Calu3 (cell line): ENCODE measurements at regions of chr12 and their contacts with region 1.

Region 1: GRCh38 chr12:4763549-4763948 is 43.3 kb downstream of the GALNT8 start:
- DNase-seq: peak; percentile 8
- H3K4me3 Mint-ChIP-seq: no peak overlapping the region
- H3K27ac Mint-ChIP-seq: no peak overlapping the region
- H3K4me1 Mint-ChIP-seq: no peaks in the 10 kb centered on the region
- H3K27me3 Mint-ChIP-seq: peaks cover 67% of the 10 kb centered on the region
- CTCF ChIP-seq: no peak

Region 2: DNA sequence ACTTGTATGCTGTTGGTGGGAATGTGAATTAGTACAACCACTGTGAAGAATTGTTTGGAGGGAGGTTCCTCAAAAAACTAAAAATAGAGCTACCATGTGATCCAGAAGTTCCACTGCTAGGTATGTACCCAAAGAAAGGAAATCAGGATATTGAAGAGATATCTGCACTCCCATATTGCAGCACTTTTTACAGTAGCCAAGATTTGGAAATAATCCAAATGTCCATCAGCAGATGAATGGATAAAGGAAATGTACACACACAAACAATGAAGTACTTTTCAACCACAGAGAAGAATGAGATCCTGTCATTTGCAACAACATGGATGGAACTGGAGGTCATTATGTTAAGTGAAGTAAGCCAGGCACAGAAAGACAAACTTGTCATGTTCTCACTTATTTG is 416.6 kb before region 1 on chr12:
- CTCF ChIA-PET with region 1: no interaction called
- intact Hi-C with region 1: no loop called
- DNase-seq: no peak
- H3K4me3 Mint-ChIP-seq: no peak overlapping the region
- H3K27ac Mint-ChIP-seq: no peak overlapping the region
- H3K4me1 Mint-ChIP-seq: no peaks in the 10 kb centered on the region
- H3K27me3 Mint-ChIP-seq: no peaks in the 10 kb centered on the region
- CTCF ChIP-seq: no peak

Region 3: GRCh38 chr12:4421590-4422031 is 341.9 kb before region 1 on chr12:
- CTCF ChIA-PET with region 1: no interaction called
- intact Hi-C with region 1: loop called (anchors 2 kb)
- DNase-seq: peak; percentile 35
- H3K4me3 Mint-ChIP-seq: no peak overlapping the region
- H3K27ac Mint-ChIP-seq: no peak overlapping the region
- H3K4me1 Mint-ChIP-seq: no peaks in the 10 kb centered on the region
- H3K27me3 Mint-ChIP-seq: peaks cover 54% of the 10 kb centered on the region
- CTCF ChIP-seq: peak; percentile 37

Region 4: GRCh38 chr12:4579305-4580102 is 184.0 kb before region 1 on chr12:
- CTCF ChIA-PET with region 1: interaction called, 5 read pairs
- intact Hi-C with region 1: loop called (anchors 1 kb)
- DNase-seq: peak; percentile 4
- H3K4me3 Mint-ChIP-seq: no peak overlapping the region
- H3K27ac Mint-ChIP-seq: no peak overlapping the region
- H3K4me1 Mint-ChIP-seq: no peaks in the 10 kb centered on the region
- H3K27me3 Mint-ChIP-seq: peaks cover 36% of the 10 kb centered on the region
- CTCF ChIP-seq: no peak

Region 5: DNA sequence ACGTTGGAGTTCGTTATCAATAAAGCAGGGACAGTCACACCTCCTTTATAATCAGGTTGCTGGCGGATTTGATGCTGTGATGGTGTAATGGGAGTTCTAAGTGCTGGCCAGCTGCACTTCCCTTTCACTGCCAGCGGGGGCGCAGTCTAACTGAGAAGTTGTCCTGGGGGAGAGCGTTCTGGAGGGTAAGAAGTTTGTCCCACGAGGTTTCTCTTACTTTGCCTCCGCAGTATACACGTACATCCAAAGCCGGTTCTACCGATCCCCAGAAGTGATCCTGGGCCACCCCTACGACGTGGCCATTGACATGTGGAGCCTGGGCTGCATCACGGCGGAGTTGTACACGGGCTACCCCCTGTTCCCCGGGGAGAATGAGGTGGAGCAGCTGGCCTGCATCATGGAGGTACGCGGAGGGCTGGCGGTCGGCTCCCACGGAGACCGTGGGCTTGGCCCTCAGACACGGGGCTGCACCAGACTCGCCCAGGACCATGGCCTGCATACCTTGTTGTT is 158.8 kb before region 1 on chr12:
- CTCF ChIA-PET with region 1: no interaction called
- intact Hi-C with region 1: loop called (anchors 10 kb)
- DNase-seq: peak; percentile 81
- H3K4me3 Mint-ChIP-seq: peak overlapping the region; percentile 97
- H3K27ac Mint-ChIP-seq: peak overlapping the region; percentile 88
- H3K4me1 Mint-ChIP-seq: no peaks in the 10 kb centered on the region
- H3K27me3 Mint-ChIP-seq: peaks cover 31% of the 10 kb centered on the region
- CTCF ChIP-seq: peak; percentile 95